Pancreas (tissue), 10 donors: ENCODE measurements at regions of chr6 and their contacts with region 1.

Region 1: GRCh38 chr6:166402582-166403277 is 20.0 kb upstream of the MPC1 start:
- DNase-seq: no peak
- ATAC-seq: no peak
- H3K4me3 ChIP-seq: no peak overlapping the region
- H3K27ac ChIP-seq: no peak overlapping the region
- H3K4me1 ChIP-seq: no peaks in the 10 kb centered on the region
- H3K27me3 ChIP-seq: no peaks in the 10 kb centered on the region
- CTCF ChIP-seq: no peak

Region 2: GRCh38 chr6:166275714-166276166 is 127.0 kb before region 1 on chr6:
- intact Hi-C with region 1: loop called (anchors 2 to 10 kb)
- DNase-seq: peak; percentile 50 to 97 (median 80)
- ATAC-seq: peak; percentile 95 to 100 (median 98)
- H3K4me3 ChIP-seq: no peak overlapping the region
- H3K27ac ChIP-seq: no peak overlapping the region
- H3K4me1 ChIP-seq: no peaks in the 10 kb centered on the region
- H3K27me3 ChIP-seq: no peaks in the 10 kb centered on the region
- CTCF ChIP-seq: peak; percentile 97 to 99 (median 99)

Region 3: GRCh38 chr6:166286839-166287271 is 115.9 kb before region 1 on chr6:
- intact Hi-C with region 1: loop called in 1 of 3 experiments (anchors 10 kb)
- DNase-seq: no peak
- ATAC-seq: peak in 2 of 4 donors; percentile 52 to 60
- H3K4me3 ChIP-seq: no peak overlapping the region
- H3K27ac ChIP-seq: no peak overlapping the region
- H3K4me1 ChIP-seq: no peaks in the 10 kb centered on the region
- H3K27me3 ChIP-seq: no peaks in the 10 kb centered on the region
- CTCF ChIP-seq: no peak

Region 4: DNA sequence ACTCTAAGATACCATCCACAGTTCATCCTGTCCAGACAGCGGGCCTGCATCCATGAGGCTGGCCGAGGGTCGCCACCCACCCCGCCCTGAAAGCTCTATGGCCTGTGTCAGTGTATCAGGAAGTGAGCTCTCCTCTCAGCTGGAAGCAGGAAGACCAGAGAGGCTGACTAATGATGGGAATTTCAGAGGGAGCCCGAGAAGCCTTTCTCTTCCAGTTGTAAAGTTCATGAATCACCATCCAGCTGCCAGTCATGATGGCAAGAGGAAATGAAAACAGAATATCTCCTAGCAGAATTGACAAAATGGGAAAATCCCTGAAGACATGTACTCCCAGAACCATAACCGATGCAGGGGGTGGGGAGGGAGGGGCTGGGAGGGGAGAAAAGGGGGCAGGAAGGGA is 333.9 kb after region 1 on chr6:
- intact Hi-C with region 1: no loop called
- DNase-seq: no peak
- ATAC-seq: peak in 3 of 4 donors; percentile 36 to 74 (median 72)
- H3K4me3 ChIP-seq: no peak overlapping the region
- H3K27ac ChIP-seq: peak overlapping the region in 1 of 4 donors; percentile 4
- H3K4me1 ChIP-seq: no peaks in the 10 kb centered on the region
- H3K27me3 ChIP-seq: no peaks in the 10 kb centered on the region
- CTCF ChIP-seq: no peak